Activated B cell treated with CpG ODN at 0.5 μM for 24 hours (primary cell): ENCODE measurements at regions of chr2 and their contacts with region 1.

Region 1: GRCh38 chr2:224927646-224928173 is 114.6 kb downstream of the DOCK10 start:
- DNase-seq: no peak
- ATAC-seq: no peak
- H3K4me3 Mint-ChIP-seq: peak overlapping the region; percentile 11
- H3K27ac Mint-ChIP-seq: peak overlapping the region; percentile 78
- H3K4me1 Mint-ChIP-seq: peaks cover 98% of the 10 kb centered on the region
- H3K27me3 Mint-ChIP-seq: no peaks in the 10 kb centered on the region
- CTCF ChIP-seq: no peak

Region 2: GRCh38 chr2:224658780-224659405 is 268.8 kb before region 1 on chr2:
- CTCF ChIA-PET with region 1: no interaction called
- POLR2A ChIA-PET with region 1: no interaction called
- intact Hi-C with region 1: no loop called
- DNase-seq: no peak
- ATAC-seq: no peak
- H3K4me3 Mint-ChIP-seq: no peak overlapping the region
- H3K27ac Mint-ChIP-seq: no peak overlapping the region
- H3K4me1 Mint-ChIP-seq: peaks cover 12% of the 10 kb centered on the region
- H3K27me3 Mint-ChIP-seq: no peaks in the 10 kb centered on the region
- CTCF ChIP-seq: no peak

Region 3: DNA sequence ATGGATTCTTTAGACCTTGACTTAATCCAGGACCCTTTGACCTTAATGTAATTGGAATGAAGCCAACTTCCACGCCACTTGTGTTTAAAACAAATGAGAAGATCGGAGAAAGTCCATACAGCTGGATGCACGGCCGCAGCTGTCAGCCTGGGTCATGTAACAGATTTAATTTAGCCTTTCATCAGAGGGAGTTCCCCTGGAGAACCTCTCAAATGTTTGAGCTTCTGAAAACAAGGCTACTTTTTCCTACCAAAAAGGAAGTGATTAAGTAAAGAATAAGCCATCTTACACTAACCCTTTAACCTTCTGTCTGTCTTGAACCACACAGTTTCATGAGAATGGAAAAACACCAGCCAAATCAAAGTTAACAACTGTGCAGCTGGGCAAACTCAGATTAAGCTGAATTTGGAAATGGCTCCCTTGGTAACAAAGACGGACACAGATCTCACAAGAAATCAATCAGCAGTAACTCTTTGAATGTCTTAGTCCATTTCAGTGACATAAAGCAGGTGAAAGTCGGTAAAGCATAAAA is 11.0 kb after region 1 on chr2:
- CTCF ChIA-PET with region 1: no interaction called
- POLR2A ChIA-PET with region 1: interaction called, 23 read pairs
- intact Hi-C with region 1: loop called (anchors 1 kb)
- DNase-seq: no peak
- ATAC-seq: peak; percentile 45
- H3K4me3 Mint-ChIP-seq: peak overlapping the region; percentile 65
- H3K27ac Mint-ChIP-seq: peak overlapping the region; percentile 82
- H3K4me1 Mint-ChIP-seq: peaks cover 82% of the 10 kb centered on the region
- H3K27me3 Mint-ChIP-seq: no peaks in the 10 kb centered on the region
- CTCF ChIP-seq: no peak

Region 4: GRCh38 chr2:224952936-224953657 is 25.4 kb after region 1 on chr2:
- CTCF ChIA-PET with region 1: no interaction called
- POLR2A ChIA-PET with region 1: interaction called, 14 read pairs
- intact Hi-C with region 1: no loop called
- DNase-seq: no peak
- ATAC-seq: peak; percentile 83
- H3K4me3 Mint-ChIP-seq: peak overlapping the region; percentile 42
- H3K27ac Mint-ChIP-seq: peak overlapping the region; percentile 79
- H3K4me1 Mint-ChIP-seq: peaks cover 92% of the 10 kb centered on the region
- H3K27me3 Mint-ChIP-seq: no peaks in the 10 kb centered on the region
- CTCF ChIP-seq: no peak

Region 5: GRCh38 chr2:225223301-225223700 is 295.6 kb after region 1 on chr2:
- CTCF ChIA-PET with region 1: no interaction called
- POLR2A ChIA-PET with region 1: no interaction called
- intact Hi-C with region 1: no loop called
- DNase-seq: no peak
- ATAC-seq: no peak
- H3K4me3 Mint-ChIP-seq: no peak overlapping the region
- H3K27ac Mint-ChIP-seq: no peak overlapping the region
- H3K4me1 Mint-ChIP-seq: no peaks in the 10 kb centered on the region
- H3K27me3 Mint-ChIP-seq: no peaks in the 10 kb centered on the region
- CTCF ChIP-seq: no peak

Region 6: DNA sequence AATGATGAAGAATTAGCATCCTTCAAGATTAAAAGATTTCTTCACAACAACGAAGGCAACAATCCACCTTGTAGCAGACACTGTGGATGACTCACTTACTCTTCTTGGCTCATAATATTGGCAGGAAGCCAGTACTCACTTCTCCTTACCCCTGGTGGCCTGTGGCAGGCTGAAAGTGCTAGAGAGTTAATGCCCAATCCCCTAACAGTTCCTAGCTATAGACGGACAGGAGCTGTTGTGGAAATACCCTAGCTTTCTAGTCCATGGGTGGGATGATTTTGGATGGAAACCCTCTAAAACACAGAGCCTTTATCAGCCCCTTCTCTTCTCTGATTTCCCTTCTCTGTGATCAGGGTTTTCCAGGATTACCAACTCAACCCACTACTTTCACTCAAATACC is 343.2 kb after region 1 on chr2:
- CTCF ChIA-PET with region 1: no interaction called
- POLR2A ChIA-PET with region 1: no interaction called
- intact Hi-C with region 1: loop called (anchors 5 kb)
- DNase-seq: peak; percentile 19
- ATAC-seq: peak; percentile 98
- H3K4me3 Mint-ChIP-seq: no peak overlapping the region
- H3K27ac Mint-ChIP-seq: peak overlapping the region; percentile 30
- H3K4me1 Mint-ChIP-seq: peaks cover 39% of the 10 kb centered on the region
- H3K27me3 Mint-ChIP-seq: no peaks in the 10 kb centered on the region
- CTCF ChIP-seq: no peak

Region 7: GRCh38 chr2:225748609-225749008 is 820.9 kb after region 1 on chr2:
- CTCF ChIA-PET with region 1: no interaction called
- POLR2A ChIA-PET with region 1: no interaction called
- intact Hi-C with region 1: no loop called
- DNase-seq: no peak
- ATAC-seq: no peak
- H3K4me3 Mint-ChIP-seq: no peak overlapping the region
- H3K27ac Mint-ChIP-seq: no peak overlapping the region
- H3K4me1 Mint-ChIP-seq: no peaks in the 10 kb centered on the region
- H3K27me3 Mint-ChIP-seq: no peaks in the 10 kb centered on the region
- CTCF ChIP-seq: no peak